Activated B cell treated with CpG ODN at 0.5 μM for 24 hours (primary cell): ENCODE measurements at regions of chr4 and their contacts with region 1.

Region 1: DNA sequence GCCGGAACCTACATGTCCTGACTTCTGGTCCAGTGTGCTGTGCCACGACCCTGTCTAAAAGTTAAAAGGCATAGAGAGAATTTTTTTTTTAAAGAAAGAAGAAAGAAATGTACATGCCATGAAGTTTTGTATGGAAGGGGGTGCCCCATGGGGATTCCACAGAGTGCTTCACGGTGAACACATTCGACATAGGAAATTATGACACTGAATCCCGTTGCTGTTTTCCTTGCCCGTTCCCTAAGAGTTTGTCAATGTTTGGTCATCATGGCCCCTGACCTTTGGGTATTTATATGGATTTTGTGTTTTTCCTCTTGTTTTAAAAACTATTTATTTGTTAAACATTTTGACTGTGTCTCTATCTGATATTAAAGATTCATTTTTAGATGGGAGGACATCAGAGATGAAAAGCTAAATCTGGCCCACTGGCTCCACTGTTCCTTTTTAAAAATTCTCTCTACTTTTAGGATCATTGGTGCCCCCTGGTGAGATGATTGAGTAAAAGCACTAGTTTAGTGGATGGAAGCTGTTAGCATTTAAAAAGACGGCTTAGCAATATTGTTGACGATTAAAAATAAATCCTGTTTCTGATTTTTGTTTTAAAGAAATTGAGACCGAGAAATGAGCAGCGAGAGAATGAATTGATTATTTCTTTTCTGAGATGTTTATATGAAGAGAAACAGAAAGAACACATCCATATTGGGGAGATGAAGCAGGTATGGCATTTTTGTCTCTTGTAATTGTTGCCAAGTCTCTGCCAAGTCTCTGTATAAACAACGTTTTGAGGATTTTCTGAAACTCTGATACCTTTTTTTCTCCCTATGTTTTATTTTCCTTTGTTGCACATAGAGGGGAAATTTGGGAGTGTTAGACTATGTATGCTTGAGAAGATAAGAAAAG is 75.0 kb downstream of the PTTG2 start:
- DNase-seq: no peak
- ATAC-seq: peak; percentile 60
- H3K4me3 Mint-ChIP-seq: no peak overlapping the region
- H3K27ac Mint-ChIP-seq: no peak overlapping the region
- H3K4me1 Mint-ChIP-seq: peaks cover 2% of the 10 kb centered on the region
- H3K27me3 Mint-ChIP-seq: no peaks in the 10 kb centered on the region
- CTCF ChIP-seq: peak; percentile 67

Region 2: GRCh38 chr4:37452952-37453280 is 582.3 kb before region 1 on chr4:
- CTCF ChIA-PET with region 1: no interaction called
- POLR2A ChIA-PET with region 1: no interaction called
- intact Hi-C with region 1: loop called (anchors 1 kb)
- DNase-seq: no peak
- ATAC-seq: no peak
- H3K4me3 Mint-ChIP-seq: peak overlapping the region; percentile 69
- H3K27ac Mint-ChIP-seq: no peak overlapping the region
- H3K4me1 Mint-ChIP-seq: peaks cover 14% of the 10 kb centered on the region
- H3K27me3 Mint-ChIP-seq: peaks cover 58% of the 10 kb centered on the region
- CTCF ChIP-seq: no peak

Region 3: DNA sequence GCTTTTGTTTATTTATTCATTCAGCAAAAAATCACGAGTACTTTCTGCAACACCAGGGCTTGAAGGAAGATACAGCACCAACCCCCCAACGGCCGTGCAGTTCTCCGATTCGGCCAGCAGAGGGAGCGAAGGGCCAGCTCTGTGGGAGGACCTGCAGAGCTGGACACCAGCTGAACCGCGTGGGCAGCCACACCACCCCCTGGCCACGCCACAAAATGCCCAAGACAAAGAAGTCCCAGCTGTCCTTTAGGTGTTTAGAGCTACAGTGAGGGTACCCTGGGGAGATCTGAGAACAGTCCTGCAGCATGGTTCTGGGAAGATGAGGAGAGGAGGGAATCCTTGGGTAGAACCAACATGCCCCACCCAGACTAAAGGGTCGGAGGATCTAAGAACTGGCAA is 432.2 kb before region 1 on chr4:
- CTCF ChIA-PET with region 1: interaction called, 11 read pairs
- POLR2A ChIA-PET with region 1: no interaction called
- intact Hi-C with region 1: loop called (anchors 1 kb)
- DNase-seq: peak; percentile 59
- ATAC-seq: peak; percentile 84
- H3K4me3 Mint-ChIP-seq: no peak overlapping the region
- H3K27ac Mint-ChIP-seq: no peak overlapping the region
- H3K4me1 Mint-ChIP-seq: peaks cover 3% of the 10 kb centered on the region
- H3K27me3 Mint-ChIP-seq: peaks cover 2% of the 10 kb centered on the region
- CTCF ChIP-seq: peak; percentile 95

Region 4: DNA sequence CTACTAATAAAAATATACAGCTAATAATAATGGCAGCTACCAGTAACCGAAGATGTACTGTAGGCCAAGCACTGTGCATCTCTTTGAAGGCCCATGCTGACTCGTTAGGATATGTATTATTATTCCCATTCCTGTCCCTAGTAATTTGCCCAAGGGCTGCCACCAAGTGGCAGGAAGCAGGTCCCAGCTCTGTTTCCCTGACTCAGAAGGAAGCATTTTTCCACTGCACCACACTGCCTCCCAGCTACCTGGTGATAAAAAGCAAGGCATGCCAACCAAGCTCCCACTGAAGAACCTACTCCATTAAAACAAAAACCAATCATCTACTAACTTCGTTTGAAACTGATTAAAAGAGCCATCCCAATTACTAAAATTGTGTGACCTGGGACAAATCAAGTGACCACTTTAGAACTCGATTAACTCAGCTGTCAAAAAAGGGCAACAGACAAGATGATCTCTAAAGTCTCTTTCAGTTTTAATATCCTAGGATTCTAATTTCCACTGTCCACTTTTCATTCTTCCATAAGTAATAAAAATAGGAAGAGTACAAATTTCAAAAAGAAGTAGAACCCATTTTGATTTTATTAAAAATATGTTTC is 233.1 kb before region 1 on chr4:
- CTCF ChIA-PET with region 1: interaction called, 77 read pairs
- POLR2A ChIA-PET with region 1: interaction called, 5 read pairs
- intact Hi-C with region 1: loop called (anchors 1 kb)
- DNase-seq: no peak
- ATAC-seq: no peak
- H3K4me3 Mint-ChIP-seq: no peak overlapping the region
- H3K27ac Mint-ChIP-seq: no peak overlapping the region
- H3K4me1 Mint-ChIP-seq: peaks cover 4% of the 10 kb centered on the region
- H3K27me3 Mint-ChIP-seq: peaks cover 1% of the 10 kb centered on the region
- CTCF ChIP-seq: no peak

Region 5: DNA sequence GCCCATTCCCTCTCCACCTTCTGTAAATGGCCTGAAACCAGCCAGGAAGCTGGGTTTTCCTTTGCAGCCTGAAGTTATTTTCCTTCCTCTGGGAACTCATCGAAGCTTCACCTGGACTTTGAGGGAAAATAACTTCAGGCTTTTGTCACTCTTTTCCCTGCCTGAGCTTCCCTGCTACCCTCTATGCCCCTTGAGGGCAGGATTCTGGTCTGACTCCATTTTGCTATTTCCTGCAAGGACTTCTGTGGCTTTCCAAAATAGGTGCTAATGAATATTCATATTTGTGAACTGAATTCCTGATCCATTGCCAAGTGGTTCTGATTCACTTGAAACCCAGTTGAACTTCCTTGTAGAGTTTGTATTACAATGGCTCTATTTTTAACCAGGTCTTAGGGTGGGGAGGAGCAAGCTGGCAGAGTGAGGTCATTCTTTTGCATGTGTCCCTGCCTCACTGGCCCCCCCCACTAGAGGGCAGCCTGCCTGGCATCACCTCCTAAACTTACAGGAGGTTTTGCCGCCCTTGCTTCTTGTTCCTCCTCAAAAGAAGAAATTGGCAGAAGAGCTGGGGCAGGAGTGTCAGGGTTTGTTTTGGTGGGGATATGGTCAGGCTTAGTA is 64.6 kb before region 1 on chr4:
- CTCF ChIA-PET with region 1: interaction called, 6 read pairs
- POLR2A ChIA-PET with region 1: no interaction called
- intact Hi-C with region 1: loop called (anchors 1 kb)
- DNase-seq: peak; percentile 47
- ATAC-seq: peak; percentile 95
- H3K4me3 Mint-ChIP-seq: no peak overlapping the region
- H3K27ac Mint-ChIP-seq: no peak overlapping the region
- H3K4me1 Mint-ChIP-seq: peaks cover 41% of the 10 kb centered on the region
- H3K27me3 Mint-ChIP-seq: no peaks in the 10 kb centered on the region
- CTCF ChIP-seq: no peak

Region 6: DNA sequence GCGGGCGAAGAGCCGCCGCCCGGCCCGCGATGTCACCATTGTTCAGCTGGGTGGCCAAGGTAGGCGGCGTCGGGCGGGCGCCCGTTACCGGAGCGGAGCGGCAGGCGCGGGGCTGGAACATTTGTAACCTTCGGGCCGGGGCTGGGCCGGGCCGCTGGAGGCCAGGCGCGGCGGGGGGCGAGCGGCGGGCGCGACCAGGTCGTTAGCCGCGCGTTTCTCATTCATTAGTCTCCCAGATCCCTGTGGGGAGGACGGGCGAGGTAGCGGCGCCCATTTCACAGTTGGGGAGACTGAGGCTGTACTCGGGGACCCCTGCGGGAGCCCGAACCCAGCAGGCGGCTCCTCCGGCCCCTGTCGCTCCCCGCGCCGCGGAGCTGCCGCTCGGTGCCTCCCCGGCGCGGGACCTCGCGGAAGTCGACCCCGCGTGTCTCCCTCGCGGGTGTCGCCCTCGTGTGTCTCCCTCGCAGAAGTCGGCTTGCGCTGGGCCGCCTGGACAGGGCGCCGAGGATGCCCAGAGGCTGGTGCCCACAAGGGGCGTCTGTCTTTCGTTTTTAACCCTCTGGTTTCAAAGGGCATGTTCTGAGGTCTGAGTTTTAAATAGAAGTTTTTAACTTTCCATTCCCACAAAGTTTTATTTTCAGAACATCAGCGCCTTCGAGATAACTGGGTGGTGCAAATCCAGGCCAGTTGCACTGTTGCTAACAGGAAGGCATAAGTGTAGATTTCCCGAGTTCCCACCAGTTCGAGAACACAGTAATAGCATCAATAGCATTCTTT is 57.6 kb before region 1 on chr4:
- CTCF ChIA-PET with region 1: interaction called, 12 read pairs
- POLR2A ChIA-PET with region 1: no interaction called
- intact Hi-C with region 1: no loop called
- DNase-seq: peak; percentile 62
- ATAC-seq: peak; percentile 73
- H3K4me3 Mint-ChIP-seq: peak overlapping the region; percentile 86
- H3K27ac Mint-ChIP-seq: peak overlapping the region; percentile 82
- H3K4me1 Mint-ChIP-seq: peaks cover 57% of the 10 kb centered on the region
- H3K27me3 Mint-ChIP-seq: no peaks in the 10 kb centered on the region
- CTCF ChIP-seq: no peak

Region 7: GRCh38 chr4:38710053-38710452 is 674.8 kb after region 1 on chr4:
- CTCF ChIA-PET with region 1: no interaction called
- POLR2A ChIA-PET with region 1: no interaction called
- intact Hi-C with region 1: no loop called
- DNase-seq: no peak
- ATAC-seq: no peak
- H3K4me3 Mint-ChIP-seq: no peak overlapping the region
- H3K27ac Mint-ChIP-seq: no peak overlapping the region
- H3K4me1 Mint-ChIP-seq: peaks cover 13% of the 10 kb centered on the region
- H3K27me3 Mint-ChIP-seq: no peaks in the 10 kb centered on the region
- CTCF ChIP-seq: no peak